ENCODE measurements at regions of chr5 and their contacts with region 1.

Region 1: DNA sequence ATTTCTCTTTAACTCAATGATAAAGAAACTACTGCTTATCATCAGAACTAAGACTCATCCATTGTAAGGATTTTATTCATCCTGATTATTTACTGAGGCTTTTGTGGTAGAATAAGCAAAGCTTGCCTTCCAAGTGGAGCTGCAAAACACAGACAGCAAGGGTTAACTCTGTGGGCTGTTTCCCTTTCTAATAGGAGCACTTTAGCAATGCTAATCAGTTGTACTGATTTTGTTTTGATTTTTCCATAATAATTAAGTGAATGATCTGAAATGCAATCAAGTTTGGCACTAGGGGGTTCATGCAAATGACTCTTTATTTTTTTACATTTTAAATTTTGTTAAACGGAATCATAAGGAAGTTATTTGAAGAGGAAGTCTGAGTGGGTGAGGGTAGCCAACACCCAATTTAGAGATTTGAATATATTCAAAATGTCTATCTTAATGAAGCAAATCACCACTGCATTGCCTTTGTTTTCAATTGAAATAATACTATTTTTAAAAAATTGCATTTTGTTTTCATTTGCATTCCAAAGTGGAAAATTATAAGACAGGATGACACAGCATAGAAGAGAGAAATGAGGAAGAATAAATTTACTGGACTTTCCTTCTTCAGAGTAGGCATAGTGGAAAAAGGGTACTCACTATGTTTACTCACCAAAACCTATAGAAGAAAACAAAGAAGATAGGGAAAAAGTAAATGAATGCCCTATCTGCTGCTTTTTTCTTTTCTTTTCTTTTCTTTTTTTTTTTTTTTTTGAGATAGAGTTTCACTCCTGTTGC is 36.6 kb downstream of the MEGF10 start:
- DNase-seq: no peak

Region 2: GRCh38 chr5:127275745-127276144 is 51.4 kb before region 1 on chr5:
- intact Hi-C with region 1: no loop called
- DNase-seq: no peak

Region 3: GRCh38 chr5:127337876-127338275 is 10.7 kb after region 1 on chr5:
- intact Hi-C with region 1: loop called in 1 of 2 experiments (anchors 1 kb)
- DNase-seq: no peak

Measured in posterior vena cava (tissue), 2 donors.